ENCODE measurements at regions of chr11 and their contacts with region 1.

Region 1: DNA sequence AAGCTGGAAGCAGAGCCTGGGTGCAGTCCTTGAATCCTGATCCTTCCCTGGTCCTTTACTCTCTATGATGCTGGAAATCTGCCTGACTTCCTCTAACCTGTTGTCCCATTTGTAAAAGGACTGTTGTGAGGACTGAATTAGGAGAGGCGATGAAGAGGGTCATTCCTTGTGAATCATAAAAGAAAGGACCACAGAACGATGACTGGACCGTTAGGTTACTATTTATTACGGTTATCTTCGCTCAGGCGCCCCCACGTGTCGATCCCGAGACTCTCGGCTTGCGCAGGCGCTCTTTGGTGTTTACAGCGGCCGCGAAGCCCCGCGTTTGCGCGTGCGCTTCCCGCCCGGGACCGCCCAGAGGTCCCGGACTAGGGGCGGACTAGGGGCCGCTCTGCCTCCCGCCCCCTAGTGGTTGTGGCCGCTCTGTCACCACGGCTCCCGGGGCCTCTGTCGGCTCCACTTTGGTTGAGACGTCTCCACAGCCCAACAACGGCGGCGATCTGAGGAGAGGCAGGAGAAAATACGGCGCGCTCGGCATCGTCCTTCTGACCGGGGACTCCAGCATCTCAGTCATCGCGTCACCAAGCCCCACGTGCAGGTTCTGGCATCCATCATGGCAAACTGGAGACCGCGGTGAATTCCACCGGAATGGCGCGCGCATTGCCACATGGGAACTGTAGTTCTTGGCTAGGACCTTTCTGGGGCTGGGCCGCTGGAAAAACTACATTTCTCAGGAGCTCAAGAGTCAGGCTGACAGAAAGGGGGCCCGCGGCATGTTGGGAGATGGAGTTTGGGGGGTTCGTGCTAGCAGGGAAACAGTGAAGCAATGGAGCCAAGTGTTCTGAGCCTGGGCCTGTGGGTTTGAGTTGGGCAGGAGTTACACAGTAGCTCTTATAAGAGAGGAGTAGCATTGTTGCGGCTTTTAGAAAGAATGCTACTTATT is at the start of gene STARD10:
- DNase-seq: peak; percentile 96 to 98
- ATAC-seq: peak; percentile 92 to 96 (median 94)
- H3K4me3 ChIP-seq: peak within 1 kb of the TSS; percentile 74
- H3K27ac ChIP-seq: peak within 1 kb of the TSS; percentile 91
- H3K4me1 ChIP-seq: peaks cover 24% of the 10 kb centered on the region
- H3K27me3 ChIP-seq: no peaks in the 10 kb centered on the region
- CTCF ChIP-seq: peak; percentile 94
- total RNA-seq, gene STARD10: 47.3 to 70.7 (median 57.7) TPM

Region 2: GRCh38 chr11:72585762-72586311 is 207.9 kb before region 1 on chr11:
- intact Hi-C with region 1: loop called in 1 of 2 experiments (anchors 5 kb)
- DNase-seq: peak in 1 of 2 donors; percentile 70
- ATAC-seq: peak; percentile 68 to 89 (median 84)
- H3K4me3 ChIP-seq: no peak overlapping the region
- H3K27ac ChIP-seq: no peak overlapping the region
- H3K4me1 ChIP-seq: peaks cover 7% of the 10 kb centered on the region
- H3K27me3 ChIP-seq: peaks cover 0 to 34% (median 0%) of the 10 kb centered on the region in 3 donors
- CTCF ChIP-seq: peak; percentile 94

Region 3: DNA sequence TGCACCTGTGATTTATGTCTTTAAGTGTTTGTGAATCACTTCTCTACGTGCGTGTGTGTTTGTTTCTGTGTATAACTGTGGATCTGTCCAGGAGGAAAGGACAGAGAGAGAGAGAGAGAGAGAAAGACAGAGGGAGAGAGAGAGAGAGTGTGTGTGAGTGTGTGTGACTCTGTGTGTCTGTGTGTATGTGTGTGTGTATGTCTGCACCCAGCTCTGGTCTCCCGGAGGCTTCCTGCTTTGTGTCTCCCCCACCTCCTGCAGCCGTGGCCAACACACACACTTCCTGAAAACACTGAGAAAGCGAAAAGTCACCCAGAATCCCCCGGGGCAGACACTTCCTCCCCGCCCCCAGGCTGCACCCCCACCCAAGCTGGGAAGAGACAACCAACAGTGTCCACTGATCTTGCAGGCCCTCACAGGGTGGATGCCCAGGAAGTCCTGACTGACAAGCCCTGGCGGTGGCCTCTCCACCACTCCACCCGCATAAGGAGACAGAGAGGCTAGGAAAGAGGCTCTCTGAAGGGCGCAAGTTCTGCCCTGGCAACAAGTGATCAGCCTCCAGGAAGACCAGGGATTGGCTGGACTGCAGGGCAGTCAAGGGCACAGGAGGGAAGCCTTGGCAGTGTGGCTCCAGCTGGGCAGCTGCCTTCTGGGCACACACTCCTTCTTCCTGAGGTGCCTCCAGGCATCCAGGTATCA is 71.5 kb before region 1 on chr11:
- intact Hi-C with region 1: loop called (anchors 2 kb)
- DNase-seq: peak; percentile 85 to 92
- ATAC-seq: peak; percentile 82 to 88 (median 86)
- H3K4me3 ChIP-seq: peak overlapping the region; percentile 76
- H3K27ac ChIP-seq: peak overlapping the region; percentile 89
- H3K4me1 ChIP-seq: peaks cover 46% of the 10 kb centered on the region
- H3K27me3 ChIP-seq: no peaks in the 10 kb centered on the region
- CTCF ChIP-seq: no peak

Region 4: DNA sequence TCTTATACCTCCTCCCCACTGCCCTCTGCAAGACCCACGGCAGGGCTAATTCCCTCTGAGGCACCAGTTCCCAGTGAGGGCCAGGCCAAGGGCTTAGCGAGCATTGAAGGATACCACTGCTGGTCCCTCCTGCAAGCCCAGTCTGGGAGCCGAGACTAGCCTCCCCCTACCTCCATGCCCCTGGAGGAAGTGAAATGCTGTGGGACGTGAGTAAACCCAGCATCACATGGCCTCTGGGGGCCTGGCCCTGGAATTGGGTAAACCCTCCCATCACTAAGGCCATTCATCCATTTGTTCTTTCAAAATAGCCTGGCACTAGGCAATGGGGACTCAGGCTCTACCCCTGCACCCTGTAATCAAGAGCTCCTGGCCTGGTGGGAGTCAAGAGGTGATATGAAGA is 66.2 kb before region 1 on chr11:
- intact Hi-C with region 1: loop called (anchors 2 kb)
- DNase-seq: peak in 1 of 2 donors; percentile 39
- ATAC-seq: no peak
- H3K4me3 ChIP-seq: no peak overlapping the region
- H3K27ac ChIP-seq: no peak overlapping the region
- H3K4me1 ChIP-seq: peaks cover 9% of the 10 kb centered on the region
- H3K27me3 ChIP-seq: no peaks in the 10 kb centered on the region
- CTCF ChIP-seq: no peak